ENCODE measurements at regions of chr1 and their contacts with region 1.

Region 1: GRCh38 chr1:223700942-223701637 is 11.2 kb upstream of the CAPN2 start:
- DNase-seq: peak; percentile 90 to 96
- ATAC-seq: peak; percentile 84 to 88
- H3K4me3 ChIP-seq: no peak overlapping the region; the same call in 2 of the 3 replicates
- H3K27ac ChIP-seq: peak overlapping the region; percentile 95 to 99
- H3K4me1 ChIP-seq: peaks cover 72% of the 10 kb centered on the region
- CTCF ChIP-seq: no peak
- EP300 ChIP-seq: peak; percentile 37 to 75; a peak in 3 of 5 replicates
- POLR2A ChIP-seq: peak; percentile 56
- RAD21 ChIP-seq: peak in 1 of 2 experiments; percentile 4; a peak in 3 of 5 replicates

Region 2: DNA sequence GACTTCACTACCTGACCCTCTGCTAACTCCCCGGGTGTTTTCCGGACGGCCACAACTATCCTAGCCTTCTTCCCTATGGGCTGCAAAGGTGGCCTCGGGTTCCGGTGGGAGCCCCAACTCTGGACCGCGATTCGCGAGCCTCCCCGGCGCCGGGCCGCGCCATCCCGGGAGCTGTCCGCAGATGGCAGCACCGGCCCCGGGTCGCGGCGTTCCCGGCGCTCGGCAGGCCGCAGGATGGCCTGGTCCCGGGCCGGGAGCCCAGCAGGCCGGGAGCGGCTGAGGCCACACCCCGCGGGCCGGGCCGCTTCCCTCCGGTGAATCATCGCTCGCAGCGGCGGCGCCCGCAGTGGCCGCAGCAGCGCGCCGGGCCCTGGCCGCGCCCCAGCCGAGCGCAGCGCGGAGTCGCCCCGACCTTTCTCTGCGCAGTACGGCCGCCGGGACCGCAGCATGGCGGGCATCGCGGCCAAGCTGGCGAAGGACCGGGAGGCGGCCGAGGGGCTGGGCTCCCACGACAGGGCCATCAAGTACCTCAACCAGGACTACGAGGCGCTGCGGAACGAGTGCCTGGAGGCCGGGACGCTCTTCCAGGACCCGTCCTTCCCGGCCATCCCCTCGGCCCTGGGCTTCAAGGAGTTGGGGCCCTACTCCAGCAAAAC is 11.2 kb after region 1 on chr1 and contains the start of gene CAPN2:
- CTCF ChIA-PET with region 1: interaction called, 24 read pairs
- POLR2A ChIA-PET with region 1: interaction called, 25 read pairs
- DNase-seq: peak; percentile 81 to 84
- ATAC-seq: peak; percentile 71 to 75
- H3K4me3 ChIP-seq: peak within 1 kb of the TSS; percentile 88
- H3K27ac ChIP-seq: peak within 1 kb of the TSS; percentile 99
- H3K4me1 ChIP-seq: peaks cover 80% of the 10 kb centered on the region
- CTCF ChIP-seq: peak; percentile 70
- EP300 ChIP-seq: no peak
- POLR2A ChIP-seq: peak; percentile 71
- RAD21 ChIP-seq: peak; percentile 57 to 88
- polyA plus RNA-seq, gene CAPN2: 199 and 217 TPM in 2 replicates

Region 3: DNA sequence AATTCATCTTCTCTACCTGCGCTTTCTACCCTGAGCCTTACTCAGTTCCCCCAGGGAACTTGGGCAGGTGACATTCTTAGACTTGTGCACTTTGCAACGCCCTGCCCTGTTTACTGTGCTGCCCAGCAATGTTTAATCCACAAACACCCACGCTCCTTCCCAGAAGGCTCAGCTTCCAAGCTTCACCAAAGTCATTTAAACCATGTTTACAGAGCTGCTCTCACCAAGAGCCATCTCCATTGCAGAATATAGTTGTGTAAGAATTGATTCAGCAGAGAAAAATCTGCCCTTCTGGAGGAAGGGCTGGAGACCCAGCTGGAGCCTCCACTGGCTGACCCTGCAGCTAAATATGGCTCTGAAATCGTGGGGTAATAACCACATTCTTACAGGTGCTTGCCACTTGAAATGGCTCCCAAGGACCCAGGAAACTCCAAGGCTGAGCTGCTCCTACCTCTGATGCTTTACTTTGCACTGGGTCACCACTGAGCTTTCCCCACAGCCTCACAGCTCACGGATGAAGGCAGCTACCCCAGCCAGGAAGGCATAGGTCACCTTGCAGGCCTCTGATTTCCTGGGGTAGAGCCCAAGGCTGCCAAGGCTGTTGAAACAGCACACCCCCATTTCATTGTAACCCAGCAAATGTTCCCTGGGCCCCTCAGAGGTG is 20.0 kb after region 1 on chr1:
- CTCF ChIA-PET with region 1: interaction called, 24 read pairs
- POLR2A ChIA-PET with region 1: interaction called, 16 read pairs
- DNase-seq: peak in 1 of 2 experiments; percentile 87
- ATAC-seq: peak; percentile 66 to 69
- H3K4me3 ChIP-seq: no peak overlapping the region
- H3K27ac ChIP-seq: peak overlapping the region; percentile 99
- H3K4me1 ChIP-seq: peaks cover 100% of the 10 kb centered on the region
- CTCF ChIP-seq: no peak
- EP300 ChIP-seq: peak; percentile 56 to 78; a peak in 2 of 5 replicates
- POLR2A ChIP-seq: no peak
- RAD21 ChIP-seq: peak; percentile 8 to 34; a peak in 2 of 5 replicates

Region 4: GRCh38 chr1:223771814-223772770 is 71.0 kb after region 1 on chr1:
- CTCF ChIA-PET with region 1: interaction called, 7 read pairs
- POLR2A ChIA-PET with region 1: interaction called, 12 read pairs
- DNase-seq: peak; percentile 58 to 75
- ATAC-seq: peak; percentile 78 to 84
- H3K4me3 ChIP-seq: no peak overlapping the region
- H3K27ac ChIP-seq: peak overlapping the region; percentile 79 to 89
- H3K4me1 ChIP-seq: peaks cover 70% of the 10 kb centered on the region
- CTCF ChIP-seq: no peak
- EP300 ChIP-seq: no peak
- POLR2A ChIP-seq: no peak
- RAD21 ChIP-seq: no peak

Region 5: DNA sequence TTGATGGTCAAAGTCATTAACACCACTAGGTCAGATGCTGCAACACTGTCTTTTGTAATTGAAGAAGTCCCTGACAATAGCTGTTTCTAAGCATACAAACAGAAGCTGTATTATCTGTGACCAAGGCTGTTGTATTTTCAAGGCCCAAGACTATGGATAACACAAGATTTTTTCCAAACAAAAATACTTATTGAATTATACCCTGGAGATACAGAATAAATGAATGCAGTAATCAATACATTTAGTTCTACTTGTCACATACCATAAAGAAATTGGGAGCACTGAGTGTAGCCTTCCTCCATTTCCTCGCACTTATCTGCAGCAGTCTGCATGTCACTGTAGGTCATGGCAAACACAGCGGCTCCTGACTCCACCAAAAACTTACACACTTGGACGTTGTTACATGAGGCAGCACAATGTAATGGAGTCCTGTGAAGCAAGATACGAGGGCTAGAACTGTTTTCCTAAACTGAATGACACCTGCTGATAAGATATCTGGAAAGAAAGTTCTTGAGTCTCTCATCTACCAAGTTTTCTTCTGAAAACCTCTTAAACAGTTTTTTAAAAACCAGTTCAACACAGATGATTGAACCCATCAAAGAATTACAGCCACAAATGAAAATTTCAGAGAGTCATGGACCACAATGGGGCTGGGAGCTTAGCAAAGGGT is 87.8 kb after region 1 on chr1:
- CTCF ChIA-PET with region 1: no interaction called
- POLR2A ChIA-PET with region 1: no interaction called
- DNase-seq: no peak
- ATAC-seq: no peak
- H3K4me3 ChIP-seq: no peak overlapping the region
- H3K27ac ChIP-seq: no peak overlapping the region
- H3K4me1 ChIP-seq: no peaks in the 10 kb centered on the region
- CTCF ChIP-seq: no peak
- EP300 ChIP-seq: no peak
- POLR2A ChIP-seq: no peak
- RAD21 ChIP-seq: no peak

Measured in A549 (cell line).